CD4-positive, alpha-beta T cell (primary cell): ENCODE measurements at regions of chr3 and their contacts with region 1.

Region 1: GRCh38 chr3:102113411-102114041 is 264.2 kb downstream of the NFKBIZ start:
- DNase-seq: peak in 2 of 14 experiments; percentile 5 to 17
- ATAC-seq: no peak
- H3K4me3 ChIP-seq: no peak overlapping the region
- H3K4me3 Mint-ChIP-seq: peak overlapping the region; percentile 6
- H3K27ac ChIP-seq: peak overlapping the region in 1 of 2 donors; percentile 61
- H3K27ac Mint-ChIP-seq: peak overlapping the region; percentile 88
- H3K4me1 ChIP-seq: peaks cover 11% of the 10 kb centered on the region
- H3K4me1 Mint-ChIP-seq: peaks cover 49% of the 10 kb centered on the region
- H3K27me3 ChIP-seq: no peaks in the 10 kb centered on the region
- H3K27me3 Mint-ChIP-seq: no peaks in the 10 kb centered on the region
- CTCF ChIP-seq: no peak

Region 2: DNA sequence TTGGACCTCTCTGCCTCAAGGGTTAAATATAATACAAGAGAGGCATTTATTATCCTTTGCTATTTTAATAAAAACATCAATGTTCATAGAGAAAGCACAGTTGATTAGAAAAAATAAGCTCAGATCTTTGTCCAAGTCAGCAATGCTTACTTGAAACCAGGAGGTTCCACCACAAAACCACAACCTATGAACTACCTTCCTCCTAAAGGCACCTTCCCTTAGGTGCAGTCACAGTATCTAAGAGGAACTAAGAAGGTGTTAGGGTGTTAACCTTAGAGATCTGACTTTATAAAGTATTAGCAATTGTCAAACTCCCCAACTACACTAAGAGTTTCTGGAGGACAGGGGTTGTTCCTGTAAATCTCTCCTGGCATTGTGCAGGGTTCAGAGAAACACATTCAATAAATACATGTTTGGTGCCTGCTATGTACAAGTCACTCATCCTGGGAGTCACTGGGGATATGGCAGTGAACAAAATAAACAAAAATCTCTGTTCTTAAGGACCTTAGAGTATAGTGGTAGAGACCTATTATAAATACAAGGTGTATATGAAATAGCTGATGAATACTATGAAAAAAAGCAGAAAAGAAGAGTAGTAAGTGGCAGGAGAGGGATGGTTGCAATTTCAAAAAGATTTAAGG is 55.6 kb before region 1 on chr3:
- CTCF ChIA-PET with region 1: no interaction called
- POLR2A ChIA-PET with region 1: interaction called, 3 read pairs
- intact Hi-C with region 1: loop called in 1 of 2 experiments (anchors 1 kb)
- DNase-seq: peak in 6 of 14 experiments; percentile 9 to 88 (median 51)
- ATAC-seq: peak; percentile 98
- H3K4me3 ChIP-seq: no peak overlapping the region
- H3K4me3 Mint-ChIP-seq: peak overlapping the region; percentile 12
- H3K27ac ChIP-seq: peak overlapping the region in 1 of 2 donors; percentile 12
- H3K27ac Mint-ChIP-seq: peak overlapping the region; percentile 69
- H3K4me1 ChIP-seq: peaks cover 32% of the 10 kb centered on the region
- H3K4me1 Mint-ChIP-seq: peaks cover 40% of the 10 kb centered on the region
- H3K27me3 ChIP-seq: no peaks in the 10 kb centered on the region
- H3K27me3 Mint-ChIP-seq: no peaks in the 10 kb centered on the region
- CTCF ChIP-seq: no peak

Region 3: GRCh38 chr3:102078854-102079253 is 34.7 kb before region 1 on chr3:
- CTCF ChIA-PET with region 1: no interaction called
- POLR2A ChIA-PET with region 1: interaction called, 24 read pairs
- intact Hi-C with region 1: loop called in 1 of 2 experiments (anchors 5 kb)
- DNase-seq: peak in 9 of 14 experiments; percentile 11 to 54 (median 36)
- ATAC-seq: peak; percentile 77
- H3K4me3 ChIP-seq: no peak overlapping the region
- H3K4me3 Mint-ChIP-seq: peak overlapping the region; percentile 70
- H3K27ac ChIP-seq: peak overlapping the region; percentile 59 to 66
- H3K27ac Mint-ChIP-seq: peak overlapping the region; percentile 96
- H3K4me1 ChIP-seq: peaks cover 22% of the 10 kb centered on the region
- H3K4me1 Mint-ChIP-seq: peaks cover 69% of the 10 kb centered on the region
- H3K27me3 ChIP-seq: no peaks in the 10 kb centered on the region
- H3K27me3 Mint-ChIP-seq: no peaks in the 10 kb centered on the region
- CTCF ChIP-seq: no peak

Region 4: DNA sequence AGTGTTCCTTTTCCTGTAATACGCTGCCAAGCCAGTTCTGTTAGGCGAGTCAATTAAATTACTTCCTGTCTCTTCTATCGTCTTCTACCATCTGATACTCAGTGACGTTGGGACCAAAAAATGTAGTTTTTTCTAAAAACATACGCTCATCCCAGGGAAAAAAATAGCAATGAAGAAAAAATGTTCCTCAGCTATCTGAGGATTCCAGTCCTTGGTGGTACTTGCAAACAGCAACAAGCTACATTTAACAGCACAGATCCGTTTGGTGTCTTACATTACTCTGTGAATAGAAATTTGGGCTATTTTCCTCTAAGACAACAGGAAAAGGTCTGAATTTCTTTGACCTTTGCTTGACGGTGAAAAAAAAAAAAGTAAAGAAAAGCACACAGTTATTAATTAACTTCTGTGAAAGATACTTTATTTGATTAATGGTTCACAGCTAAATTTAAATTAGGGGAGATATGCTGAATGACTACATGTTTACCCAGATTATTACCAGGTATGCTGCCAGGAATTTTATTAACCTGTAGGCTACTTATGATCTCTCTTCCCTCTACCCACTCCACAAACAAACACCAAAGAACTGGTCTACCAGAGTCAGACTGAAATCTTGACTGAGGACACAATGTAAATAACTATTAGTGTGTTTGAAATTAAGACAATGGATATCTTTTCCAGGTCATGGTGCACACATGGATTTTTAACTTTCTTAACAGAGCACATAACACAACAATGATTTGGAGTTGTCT is 66.9 kb after region 1 on chr3:
- CTCF ChIA-PET with region 1: no interaction called
- POLR2A ChIA-PET with region 1: no interaction called
- intact Hi-C with region 1: loop called in 1 of 2 experiments (anchors 10 kb)
- DNase-seq: peak in 4 of 14 experiments; percentile 4 to 36 (median 15)
- ATAC-seq: peak; percentile 78
- H3K4me3 ChIP-seq: peak overlapping the region; percentile 6
- H3K4me3 Mint-ChIP-seq: no peak overlapping the region
- H3K27ac ChIP-seq: peak overlapping the region in 1 of 2 donors; percentile 5
- H3K27ac Mint-ChIP-seq: no peak overlapping the region
- H3K4me1 ChIP-seq: peaks cover 3% of the 10 kb centered on the region
- H3K4me1 Mint-ChIP-seq: no peaks in the 10 kb centered on the region
- H3K27me3 ChIP-seq: no peaks in the 10 kb centered on the region
- H3K27me3 Mint-ChIP-seq: no peaks in the 10 kb centered on the region
- CTCF ChIP-seq: no peak